Activated CD4-positive, alpha-beta T cell treated with anti-CD3 and anti-CD28 coated beads for 36 hours (primary cell): ENCODE measurements at regions of chr19 and their contacts with region 1.

Region 1: DNA sequence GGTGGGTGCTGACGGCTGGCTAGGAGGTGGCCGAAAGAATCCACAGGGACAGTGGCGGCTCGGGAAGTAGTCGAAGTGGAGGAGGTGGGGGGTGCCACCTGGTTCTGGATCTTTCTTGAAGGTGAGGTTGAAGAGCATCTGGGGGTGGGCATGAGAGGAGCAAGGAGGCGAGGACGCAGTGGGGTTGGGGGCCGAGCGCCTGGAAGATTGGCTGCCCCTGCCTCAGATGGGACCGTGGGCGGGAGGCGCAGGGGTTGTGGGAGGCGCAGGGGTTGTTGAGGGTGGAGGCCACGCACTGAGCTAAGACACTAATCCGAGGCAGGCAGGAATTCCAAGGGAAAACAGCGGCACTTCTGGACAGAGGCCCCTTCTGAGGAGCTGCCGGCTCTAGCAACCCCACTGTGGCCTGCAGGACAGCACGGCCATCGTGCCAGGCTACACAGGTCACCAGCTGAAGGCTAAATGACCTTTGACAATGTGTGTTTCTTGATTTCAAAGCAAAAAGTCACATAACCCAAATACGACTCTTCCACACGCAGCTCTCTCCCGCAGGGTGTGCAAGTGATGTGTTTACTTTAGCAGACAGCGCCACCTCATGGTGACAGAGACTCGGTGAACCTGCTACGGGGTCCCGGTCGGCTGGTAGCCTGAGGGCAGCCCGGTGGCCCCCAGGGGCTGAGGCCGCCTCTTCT is 44.1 kb upstream of the RANBP3 start:
- DNase-seq: peak; percentile 91
- ATAC-seq: peak; percentile 98
- H3K4me3 Mint-ChIP-seq: no peak overlapping the region
- H3K27ac Mint-ChIP-seq: no peak overlapping the region
- H3K4me1 Mint-ChIP-seq: no peaks in the 10 kb centered on the region
- H3K27me3 Mint-ChIP-seq: peaks cover 2% of the 10 kb centered on the region

Region 2: GRCh38 chr19:5773276-5773675 is 248.7 kb before region 1 on chr19:
- CTCF ChIA-PET with region 1: interaction called, 3 read pairs
- POLR2A ChIA-PET with region 1: no interaction called
- intact Hi-C with region 1: loop called in 1 of 2 experiments (anchors 1 kb)
- DNase-seq: no peak
- ATAC-seq: no peak
- H3K4me3 Mint-ChIP-seq: no peak overlapping the region
- H3K27ac Mint-ChIP-seq: no peak overlapping the region
- H3K4me1 Mint-ChIP-seq: no peaks in the 10 kb centered on the region
- H3K27me3 Mint-ChIP-seq: no peaks in the 10 kb centered on the region

Region 3: DNA sequence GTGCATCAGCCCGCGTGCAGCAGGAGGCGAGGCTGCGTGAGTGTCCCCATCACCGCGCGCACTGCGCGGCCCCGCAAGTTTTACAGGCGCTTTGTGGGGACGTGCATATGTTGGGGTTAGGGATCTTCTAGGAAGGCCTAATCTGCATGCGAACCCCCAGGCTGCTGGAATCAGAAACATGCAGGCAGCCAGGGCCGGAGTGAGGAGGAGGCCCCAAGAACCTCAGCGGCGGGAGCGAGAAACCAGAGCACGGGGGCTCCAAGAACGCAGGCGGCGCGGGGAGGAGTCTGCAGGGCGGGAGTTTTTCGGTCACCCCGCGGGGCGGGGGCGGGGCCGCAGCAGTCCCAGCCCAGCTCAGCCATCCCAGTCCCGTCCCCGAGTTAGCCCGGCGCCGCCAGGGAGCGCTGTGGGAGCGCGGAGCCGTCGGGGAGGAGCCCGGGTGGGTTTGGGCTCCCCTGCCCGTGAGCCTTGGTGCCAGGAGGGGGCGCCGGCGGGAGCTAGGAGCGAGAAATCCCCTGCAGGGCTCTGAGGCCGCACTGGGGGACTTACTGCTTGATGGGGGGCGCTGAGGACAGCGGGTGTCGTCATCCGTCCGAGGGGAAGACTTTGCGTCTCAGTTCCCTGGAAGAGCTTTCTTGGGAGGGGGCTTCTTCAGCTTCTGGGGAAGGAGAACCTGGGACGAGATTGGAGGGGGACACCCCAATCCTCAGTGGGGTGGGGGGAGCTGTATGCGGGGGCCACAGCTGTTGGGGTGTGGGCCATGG is 218.1 kb before region 1 on chr19:
- CTCF ChIA-PET with region 1: interaction called, 21 read pairs
- POLR2A ChIA-PET with region 1: no interaction called
- intact Hi-C with region 1: loop called (anchors 1 kb)
- DNase-seq: peak; percentile 98
- ATAC-seq: peak; percentile 97
- H3K4me3 Mint-ChIP-seq: peak overlapping the region; percentile 63
- H3K27ac Mint-ChIP-seq: peak overlapping the region; percentile 47
- H3K4me1 Mint-ChIP-seq: peaks cover 21% of the 10 kb centered on the region
- H3K27me3 Mint-ChIP-seq: peaks cover 20% of the 10 kb centered on the region

Region 4: DNA sequence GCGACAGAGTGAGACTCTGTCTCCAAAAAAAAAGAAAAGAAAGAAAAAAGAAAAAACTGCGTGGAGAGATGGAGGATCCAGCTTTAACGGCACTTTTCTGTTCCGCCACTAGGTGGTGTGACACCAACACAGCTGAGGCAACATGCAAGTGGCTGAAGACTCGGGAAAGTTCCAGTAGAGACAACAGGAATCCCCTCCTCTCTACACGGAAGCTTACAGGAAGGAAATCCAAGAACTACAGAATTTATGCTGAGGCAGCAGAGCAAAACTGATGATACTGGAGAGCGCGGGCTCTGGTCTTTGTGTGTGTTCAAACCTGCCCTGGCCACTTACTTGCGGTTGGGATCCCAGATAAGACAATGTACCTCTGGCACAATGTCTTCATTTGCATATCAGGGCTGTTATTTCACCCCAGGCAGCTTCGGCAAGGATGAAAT is 54.0 kb before region 1 on chr19:
- CTCF ChIA-PET with region 1: interaction called, 21 read pairs
- POLR2A ChIA-PET with region 1: no interaction called
- intact Hi-C with region 1: loop called in 1 of 2 experiments (anchors 5 kb)
- DNase-seq: peak; percentile 80
- ATAC-seq: peak; percentile 89
- H3K4me3 Mint-ChIP-seq: no peak overlapping the region
- H3K27ac Mint-ChIP-seq: peak overlapping the region; percentile 89
- H3K4me1 Mint-ChIP-seq: peaks cover 87% of the 10 kb centered on the region
- H3K27me3 Mint-ChIP-seq: no peaks in the 10 kb centered on the region

Region 5: DNA sequence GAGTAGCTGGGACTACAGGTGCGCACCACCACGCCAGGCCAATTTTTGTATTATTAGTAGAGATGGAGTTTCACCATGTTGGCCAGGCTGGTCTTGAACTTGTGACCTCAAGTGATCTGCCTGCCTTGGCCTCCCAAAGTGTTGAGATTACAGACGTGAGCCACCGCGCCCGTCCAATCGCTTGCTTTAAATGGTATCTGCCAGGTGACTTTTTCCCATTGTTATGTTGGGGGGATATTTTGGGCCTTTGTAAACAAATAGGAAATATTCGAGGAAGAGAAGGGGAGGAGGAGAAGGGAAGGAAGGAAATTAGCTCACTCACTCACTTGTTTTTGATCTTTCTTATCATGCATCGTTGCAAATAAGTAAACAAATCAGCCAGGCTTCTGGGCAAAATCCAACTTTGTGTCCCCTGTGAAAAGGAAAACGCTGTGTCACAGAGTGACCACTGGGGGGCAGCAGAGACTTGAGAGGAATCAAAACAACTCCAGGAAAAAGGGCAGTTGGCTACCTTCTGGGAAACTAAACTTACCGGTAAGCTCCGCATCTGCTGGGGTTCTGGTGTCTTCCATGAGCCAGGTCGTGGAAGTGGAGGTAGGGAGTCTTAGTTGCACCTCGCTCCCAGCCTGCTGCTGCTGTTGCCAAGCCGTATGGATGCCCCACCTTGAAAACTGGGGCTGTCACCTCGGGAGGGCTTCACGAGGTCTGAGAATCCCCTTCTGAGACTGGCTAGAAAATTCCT is 34.8 kb before region 1 on chr19:
- CTCF ChIA-PET with region 1: interaction called, 14 read pairs
- POLR2A ChIA-PET with region 1: interaction called, 3 read pairs
- intact Hi-C with region 1: loop called (anchors 1 to 2 kb)
- DNase-seq: peak; percentile 84
- ATAC-seq: peak; percentile 57
- H3K4me3 Mint-ChIP-seq: peak overlapping the region; percentile 46
- H3K27ac Mint-ChIP-seq: no peak overlapping the region
- H3K4me1 Mint-ChIP-seq: peaks cover 29% of the 10 kb centered on the region
- H3K27me3 Mint-ChIP-seq: no peaks in the 10 kb centered on the region

Region 6: DNA sequence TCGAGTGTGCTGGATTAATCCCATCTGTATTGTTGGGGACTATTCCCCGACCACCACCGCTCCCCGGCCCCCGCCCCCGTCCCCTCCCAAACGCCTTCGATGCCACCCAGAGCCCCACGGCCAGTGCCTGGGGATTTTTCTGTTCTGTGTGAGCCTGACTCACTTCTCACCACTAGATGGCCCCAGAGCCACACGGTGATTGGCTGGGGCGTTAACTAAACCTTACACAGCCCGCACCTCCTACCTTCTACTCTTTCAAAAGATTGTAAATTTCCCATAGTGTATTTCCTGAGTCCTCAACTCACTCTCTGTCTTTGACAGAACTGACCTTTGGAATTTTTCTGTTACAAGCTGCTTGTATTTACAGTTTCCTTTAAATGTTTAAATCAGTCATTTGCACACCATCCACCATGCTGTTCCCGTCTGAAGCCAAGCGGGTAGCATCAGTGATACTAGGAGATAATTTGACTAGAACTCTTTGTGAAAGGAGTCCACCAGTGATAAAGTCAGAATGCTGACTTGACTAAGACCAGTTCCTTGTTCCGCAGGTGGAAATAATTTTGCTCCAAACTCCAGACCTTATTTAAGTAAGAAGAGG is 26.9 kb after region 1 on chr19:
- CTCF ChIA-PET with region 1: interaction called, 11 read pairs
- POLR2A ChIA-PET with region 1: no interaction called
- intact Hi-C with region 1: no loop called
- DNase-seq: peak; percentile 87
- ATAC-seq: peak; percentile 100
- H3K4me3 Mint-ChIP-seq: no peak overlapping the region
- H3K27ac Mint-ChIP-seq: no peak overlapping the region
- H3K4me1 Mint-ChIP-seq: peaks cover 5% of the 10 kb centered on the region
- H3K27me3 Mint-ChIP-seq: peaks cover 4% of the 10 kb centered on the region